Activated CD4-positive, alpha-beta T cell treated with anti-CD3 and anti-CD28 coated beads for 36 hours (primary cell): ENCODE measurements at regions of chr22 and their contacts with region 1.

Region 1: DNA sequence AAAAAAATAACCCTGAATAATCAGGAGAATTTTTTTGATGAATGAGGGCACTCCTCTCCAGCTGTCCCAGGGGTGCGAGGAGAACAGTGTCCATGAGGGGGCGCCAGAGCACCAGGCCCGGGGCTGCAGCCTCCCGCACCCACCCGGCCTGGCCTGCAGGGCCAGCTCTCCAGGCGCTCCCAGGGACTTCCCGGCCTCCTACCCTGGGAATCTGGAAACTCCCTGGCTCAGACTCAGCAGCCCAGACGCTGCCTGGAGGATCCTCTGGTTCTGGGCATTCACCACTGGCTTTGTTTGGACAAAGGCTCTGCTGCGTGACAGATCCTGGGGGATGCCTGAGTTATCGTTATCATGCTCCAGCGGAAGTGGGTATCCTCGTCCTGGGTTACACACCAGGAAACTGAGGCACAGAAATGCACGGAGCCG is 31.0 kb downstream of the MCM5 start:
- DNase-seq: peak; percentile 81
- ATAC-seq: peak; percentile 76
- H3K4me3 Mint-ChIP-seq: no peak overlapping the region
- H3K27ac Mint-ChIP-seq: no peak overlapping the region
- H3K4me1 Mint-ChIP-seq: no peaks in the 10 kb centered on the region
- H3K27me3 Mint-ChIP-seq: no peaks in the 10 kb centered on the region

Region 2: DNA sequence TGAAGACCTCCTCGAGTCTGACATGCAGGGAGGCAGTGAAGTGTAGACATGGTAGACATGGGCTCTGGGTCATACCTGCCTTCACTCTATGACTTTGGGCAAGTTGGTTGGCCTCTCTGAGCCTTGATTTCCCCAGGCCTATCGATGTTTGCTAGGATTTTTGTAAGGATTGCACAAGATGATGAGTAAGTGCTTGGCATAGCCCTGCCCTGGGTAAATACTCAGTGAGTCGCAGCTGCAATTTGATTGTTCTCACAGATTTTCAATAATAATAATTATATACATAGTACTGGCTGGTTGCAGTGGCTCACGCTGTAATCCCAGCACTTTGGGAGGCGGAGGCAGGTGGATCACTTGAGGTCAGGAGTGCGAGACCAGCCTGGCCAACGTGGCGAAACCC is 12.8 kb before region 1 on chr22:
- CTCF ChIA-PET with region 1: interaction called, 16 read pairs
- POLR2A ChIA-PET with region 1: interaction called, 4 read pairs
- intact Hi-C with region 1: no loop called
- DNase-seq: no peak
- ATAC-seq: no peak
- H3K4me3 Mint-ChIP-seq: no peak overlapping the region
- H3K27ac Mint-ChIP-seq: no peak overlapping the region
- H3K4me1 Mint-ChIP-seq: no peaks in the 10 kb centered on the region
- H3K27me3 Mint-ChIP-seq: no peaks in the 10 kb centered on the region

Region 3: DNA sequence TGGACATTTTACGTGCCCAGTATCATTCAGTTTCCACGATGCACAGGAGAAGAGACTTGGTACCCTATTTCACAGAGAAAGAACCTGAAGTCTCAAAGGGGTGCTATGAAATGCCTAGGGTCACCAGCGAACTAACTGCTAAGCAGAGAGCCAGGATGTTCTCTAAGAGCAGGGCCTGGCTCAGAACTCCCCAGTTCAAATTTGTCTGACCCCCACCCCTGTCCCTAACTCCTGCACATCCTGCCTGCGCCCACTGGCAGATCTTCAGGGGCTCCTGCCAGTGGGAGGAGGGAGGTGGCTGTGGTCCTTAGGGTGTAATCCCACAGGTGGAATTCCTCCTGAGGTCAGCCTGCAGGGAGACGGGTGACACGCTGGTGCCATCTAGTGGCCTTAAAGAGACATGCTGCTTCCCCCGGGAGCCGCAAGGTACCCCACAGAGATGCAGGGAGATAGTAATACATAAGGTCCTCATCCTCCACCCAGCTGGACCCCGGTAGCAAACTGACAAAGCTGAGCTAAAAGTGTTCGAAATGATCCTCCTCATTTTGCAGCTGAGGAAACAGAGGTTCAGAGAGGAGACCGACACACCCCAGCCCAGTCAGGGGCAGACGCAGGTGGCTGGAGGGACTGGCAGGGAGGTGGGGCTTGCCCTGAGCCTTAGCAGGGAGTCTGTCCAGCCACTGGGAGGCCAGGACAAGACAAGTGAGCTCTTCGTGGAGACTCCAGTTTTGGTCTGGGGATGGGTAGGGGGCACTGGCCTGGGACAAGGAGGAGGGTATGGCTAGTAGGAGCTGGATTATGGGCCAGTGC is 152.2 kb after region 1 on chr22:
- CTCF ChIA-PET with region 1: interaction called, 21 read pairs
- POLR2A ChIA-PET with region 1: no interaction called
- intact Hi-C with region 1: loop called (anchors 1 to 2 kb)
- DNase-seq: peak; percentile 66
- ATAC-seq: peak; percentile 80
- H3K4me3 Mint-ChIP-seq: no peak overlapping the region
- H3K27ac Mint-ChIP-seq: no peak overlapping the region
- H3K4me1 Mint-ChIP-seq: no peaks in the 10 kb centered on the region
- H3K27me3 Mint-ChIP-seq: peaks cover 4% of the 10 kb centered on the region

Region 4: DNA sequence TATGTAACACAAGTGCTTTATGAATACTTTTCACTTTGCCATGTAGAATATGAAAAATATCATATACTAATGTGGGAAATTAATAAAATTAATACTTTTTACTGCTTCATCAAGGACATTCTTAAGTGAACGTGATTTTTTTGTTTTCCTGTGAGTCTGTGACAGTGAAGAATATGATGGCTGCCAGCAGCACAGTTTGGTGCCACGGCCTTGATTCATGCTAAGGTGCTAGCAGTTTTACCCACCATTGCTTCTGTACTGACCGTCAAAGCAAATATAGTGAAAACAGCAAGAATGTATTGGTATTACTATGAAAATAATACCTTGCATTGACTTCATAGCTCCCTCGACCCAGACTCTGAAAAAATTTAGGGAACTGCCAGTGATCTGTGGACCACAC is 366.5 kb after region 1 on chr22:
- CTCF ChIA-PET with region 1: no interaction called
- POLR2A ChIA-PET with region 1: no interaction called
- intact Hi-C with region 1: no loop called
- DNase-seq: no peak
- ATAC-seq: no peak
- H3K4me3 Mint-ChIP-seq: no peak overlapping the region
- H3K27ac Mint-ChIP-seq: no peak overlapping the region
- H3K4me1 Mint-ChIP-seq: no peaks in the 10 kb centered on the region
- H3K27me3 Mint-ChIP-seq: no peaks in the 10 kb centered on the region